Activated T-helper 2 cell treated with anti-CD3 and anti-CD28 coated beads, Interferon-gamma antibody, Interleukin-2, Interleukin-4, amounts not matched to agents 10 μg/mL and 5 μg/mL and 100 μg/mL, durations not matched to agents 14 hours and 24 hours and 36 hours (primary cell): ENCODE measurements at regions of chr12 and their contacts with region 1.

Region 1: GRCh38 chr12:51083126-51083833 is at the start of gene CSRNP2:
- DNase-seq: peak; percentile 94
- H3K4me3 Mint-ChIP-seq: peak within 1 kb of the TSS; percentile 98
- H3K27ac Mint-ChIP-seq: peak within 1 kb of the TSS; percentile 90
- H3K4me1 Mint-ChIP-seq: peaks cover 38% of the 10 kb centered on the region
- H3K27me3 Mint-ChIP-seq: no peaks in the 10 kb centered on the region
- total RNA-seq, gene CSRNP2: 28.3 and 31.2 TPM in 2 replicates

Region 2: DNA sequence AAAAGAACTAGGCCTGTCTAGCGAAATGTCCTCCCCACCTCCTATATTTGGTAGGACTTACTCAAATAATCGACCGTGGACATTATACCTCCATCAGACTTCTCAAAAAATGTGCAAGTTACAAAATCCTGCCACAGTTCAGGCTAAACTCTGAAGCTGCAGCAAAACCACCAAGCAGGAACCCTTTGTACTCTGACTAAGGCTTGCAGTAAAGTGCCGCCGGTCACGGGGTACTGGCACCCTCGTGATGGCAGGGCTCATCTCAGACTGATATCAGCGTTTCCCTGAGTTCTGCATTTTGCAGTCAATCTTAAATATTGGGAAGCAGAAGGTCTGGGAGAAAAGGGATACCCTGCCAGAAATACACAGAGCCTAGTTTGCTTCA is 74.2 kb before region 1 on chr12:
- intact Hi-C with region 1: no loop called
- DNase-seq: no peak
- H3K4me3 Mint-ChIP-seq: peak overlapping the region; percentile 62
- H3K27ac Mint-ChIP-seq: peak overlapping the region; percentile 54
- H3K4me1 Mint-ChIP-seq: peaks cover 31% of the 10 kb centered on the region
- H3K27me3 Mint-ChIP-seq: no peaks in the 10 kb centered on the region

Region 3: DNA sequence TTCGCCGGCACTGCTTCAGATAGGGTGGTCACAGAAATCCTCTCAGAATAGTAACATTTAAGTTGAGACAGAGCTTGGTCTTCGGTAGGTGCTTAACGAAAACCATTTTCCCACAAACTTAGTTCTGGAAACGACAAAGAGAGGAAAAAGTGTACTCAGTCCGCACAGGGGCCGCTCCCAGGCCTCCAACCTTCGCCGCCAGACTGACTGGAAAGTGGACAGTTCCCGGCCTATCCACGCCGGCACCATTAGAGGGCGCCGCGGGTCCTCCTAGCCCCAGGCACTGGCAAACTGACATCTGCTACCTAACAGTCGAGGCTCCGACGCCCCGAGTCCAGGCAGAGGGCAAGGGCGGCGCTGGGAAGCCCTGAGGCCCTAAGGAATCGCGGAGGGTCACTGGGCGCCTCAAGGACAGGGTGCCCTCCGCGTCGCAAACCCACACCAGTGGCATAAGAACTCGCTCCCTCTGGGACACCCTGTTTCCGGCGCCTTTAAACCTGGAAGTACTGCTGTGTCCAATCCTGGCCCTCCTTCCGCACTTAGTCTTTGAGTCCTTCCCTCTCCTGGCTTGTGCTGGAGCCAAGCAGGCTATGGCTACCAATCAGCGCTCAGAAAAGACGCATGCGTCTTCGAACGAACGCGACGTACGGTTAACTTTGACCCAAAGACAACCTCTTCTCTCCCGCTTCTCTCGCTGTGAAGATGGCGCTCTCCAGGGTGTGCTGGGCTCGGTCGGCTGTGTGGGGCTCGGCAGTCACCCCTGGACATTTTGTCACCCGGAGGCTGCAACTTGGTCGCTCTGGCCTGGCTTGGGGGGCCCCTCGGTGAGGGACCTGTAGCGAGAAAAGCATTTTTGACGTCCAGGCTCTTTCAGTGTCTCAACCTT is 35.4 kb before region 1 on chr12 and contains the start of gene LETMD1:
- intact Hi-C with region 1: loop called (anchors 1 kb)
- DNase-seq: peak; percentile 92
- H3K4me3 Mint-ChIP-seq: peak within 1 kb of the TSS; percentile 92
- H3K27ac Mint-ChIP-seq: peak within 1 kb of the TSS; percentile 83
- H3K4me1 Mint-ChIP-seq: peaks cover 22% of the 10 kb centered on the region
- H3K27me3 Mint-ChIP-seq: no peaks in the 10 kb centered on the region
- total RNA-seq, gene LETMD1: 61.0 and 63.1 TPM in 2 replicates

Region 4: GRCh38 chr12:51132693-51133092 is 49.4 kb after region 1 on chr12:
- intact Hi-C with region 1: no loop called
- DNase-seq: no peak
- H3K4me3 Mint-ChIP-seq: no peak overlapping the region
- H3K27ac Mint-ChIP-seq: no peak overlapping the region
- H3K4me1 Mint-ChIP-seq: peaks cover 2% of the 10 kb centered on the region
- H3K27me3 Mint-ChIP-seq: no peaks in the 10 kb centered on the region

Region 5: GRCh38 chr12:51172515-51173431 is 89.5 kb after region 1 on chr12 and contains the start of gene TFCP2:
- intact Hi-C with region 1: loop called (anchors 2 kb)
- DNase-seq: peak; percentile 93
- H3K4me3 Mint-ChIP-seq: peak within 1 kb of the TSS; percentile 80
- H3K27ac Mint-ChIP-seq: peak within 1 kb of the TSS; percentile 71
- H3K4me1 Mint-ChIP-seq: peaks cover 10% of the 10 kb centered on the region
- H3K27me3 Mint-ChIP-seq: no peaks in the 10 kb centered on the region
- total RNA-seq, gene TFCP2: 42.2 and 44.2 TPM in 2 replicates

Region 6: GRCh38 chr12:51246254-51246853 is 163.1 kb after region 1 on chr12:
- intact Hi-C with region 1: loop called (anchors 10 kb)
- DNase-seq: no peak
- H3K4me3 Mint-ChIP-seq: peak overlapping the region; percentile 11
- H3K27ac Mint-ChIP-seq: peak overlapping the region; percentile 62
- H3K4me1 Mint-ChIP-seq: peaks cover 37% of the 10 kb centered on the region
- H3K27me3 Mint-ChIP-seq: no peaks in the 10 kb centered on the region

Region 7: GRCh38 chr12:51326762-51327439 is 243.6 kb after region 1 on chr12:
- intact Hi-C with region 1: loop called (anchors 10 kb)
- DNase-seq: no peak
- H3K4me3 Mint-ChIP-seq: peak overlapping the region; percentile 63
- H3K27ac Mint-ChIP-seq: peak overlapping the region; percentile 95
- H3K4me1 Mint-ChIP-seq: peaks cover 55% of the 10 kb centered on the region
- H3K27me3 Mint-ChIP-seq: no peaks in the 10 kb centered on the region